Mammary epithelial cell (primary cell): ENCODE measurements at regions of chr6 and their contacts with region 1.

Region 1: GRCh38 chr6:53302678-53303360 is 45.9 kb downstream of the ELOVL5 start:
- DNase-seq: peak; percentile 84
- H3K4me3 ChIP-seq: peak overlapping the region in 1 of 3 experiments; percentile 17
- H3K27ac ChIP-seq: peak overlapping the region; percentile 98
- H3K4me1 ChIP-seq: peaks cover 50% of the 10 kb centered on the region
- H3K27me3 ChIP-seq: no peaks in the 10 kb centered on the region
- CTCF ChIP-seq: no peak

Region 2: DNA sequence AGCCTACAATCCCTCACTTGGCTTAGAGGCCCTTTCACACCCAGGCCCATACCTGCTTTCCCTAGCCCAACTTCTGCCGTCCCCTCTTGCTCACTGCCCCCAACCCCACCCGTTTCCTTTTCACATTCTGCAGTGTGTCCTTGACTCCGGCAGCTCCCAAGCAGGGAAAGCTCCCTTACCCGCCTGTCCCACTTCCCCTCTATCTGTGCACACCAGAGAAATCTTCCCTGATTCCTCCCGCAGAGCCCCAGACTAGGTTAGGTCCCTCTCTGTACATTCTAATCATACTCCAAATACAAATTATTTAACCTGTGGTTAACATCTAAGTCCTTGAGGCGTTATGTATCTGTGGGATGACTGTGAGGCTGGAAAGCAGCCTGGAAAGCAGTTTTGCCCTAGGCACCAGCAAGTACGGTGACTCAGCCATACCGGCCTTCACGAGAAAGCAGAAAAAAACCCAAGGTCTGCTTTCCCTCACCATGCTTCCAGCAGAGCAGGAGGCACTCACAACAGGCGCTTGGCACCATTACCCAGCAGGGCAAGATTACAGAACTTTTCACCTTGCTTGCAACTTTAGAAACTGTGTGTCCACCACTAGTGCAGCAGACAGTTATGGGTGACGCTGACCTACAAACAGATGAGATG is 23.7 kb after region 1 on chr6:
- CTCF ChIA-PET with region 1: no interaction called
- dilution Hi-C with region 1: no loop called
- in situ Hi-C with region 1: no loop called
- intact Hi-C with region 1: loop called (anchors 1 kb)
- DNase-seq: peak; percentile 97
- H3K4me3 ChIP-seq: no peak overlapping the region
- H3K27ac ChIP-seq: peak overlapping the region; percentile 64
- H3K4me1 ChIP-seq: peaks cover 51% of the 10 kb centered on the region
- H3K27me3 ChIP-seq: no peaks in the 10 kb centered on the region
- CTCF ChIP-seq: no peak